ENCODE measurements at regions of chr7 and their contacts with region 1.

Region 1: GRCh38 chr7:100974018-100974417 is 4.7 kb downstream of the MUC12 start:
- DNase-seq: no peak
- ATAC-seq: no peak
- H3K4me3 ChIP-seq: no peak overlapping the region
- H3K27ac ChIP-seq: no peak overlapping the region
- H3K4me1 ChIP-seq: no peaks in the 10 kb centered on the region
- H3K27me3 ChIP-seq: peaks cover 0 to 35% (median 4%) of the 10 kb centered on the region in 3 donors
- CTCF ChIP-seq: no peak

Region 2: GRCh38 chr7:100949933-100950443 is 24.0 kb before region 1 on chr7:
- intact Hi-C with region 1: loop called in 1 of 2 experiments (anchors 1 kb)
- DNase-seq: no peak
- ATAC-seq: no peak
- H3K4me3 ChIP-seq: peak overlapping the region; percentile 32
- H3K27ac ChIP-seq: no peak overlapping the region
- H3K4me1 ChIP-seq: no peaks in the 10 kb centered on the region
- H3K27me3 ChIP-seq: peaks cover 0 to 32% (median 0%) of the 10 kb centered on the region in 3 donors
- CTCF ChIP-seq: no peak

Region 3: GRCh38 chr7:101567230-101567629 is 593.2 kb after region 1 on chr7:
- intact Hi-C with region 1: no loop called
- DNase-seq: no peak
- ATAC-seq: no peak
- H3K4me3 ChIP-seq: no peak overlapping the region
- H3K27ac ChIP-seq: no peak overlapping the region
- H3K4me1 ChIP-seq: no peaks in the 10 kb centered on the region
- H3K27me3 ChIP-seq: no peaks in the 10 kb centered on the region
- CTCF ChIP-seq: no peak